CD8-positive, alpha-beta T cell (primary cell): ENCODE measurements at regions of chr1 and their contacts with region 1.

Region 1: GRCh38 chr1:151762941-151763921 is at the start of gene MRPL9:
- DNase-seq: peak; percentile 75 to 89 (median 83)
- ATAC-seq: peak; percentile 99
- H3K4me3 ChIP-seq: peak within 1 kb of the TSS; percentile 78 to 88
- H3K4me3 Mint-ChIP-seq: peak within 1 kb of the TSS; percentile 90
- H3K27ac ChIP-seq: peak within 1 kb of the TSS; percentile 72 to 92
- H3K27ac Mint-ChIP-seq: peak within 1 kb of the TSS; percentile 96
- H3K4me1 ChIP-seq: peaks cover 12% of the 10 kb centered on the region
- H3K4me1 Mint-ChIP-seq: peaks cover 20% of the 10 kb centered on the region
- H3K27me3 ChIP-seq: no peaks in the 10 kb centered on the region
- H3K27me3 Mint-ChIP-seq: no peaks in the 10 kb centered on the region
- CTCF ChIP-seq: no peak
- total RNA-seq, gene MRPL9: 176 to 186 TPM

Region 2: GRCh38 chr1:151165738-151166505 is 597.3 kb before region 1 on chr1 and contains the starts of genes LYSMD1 and SCNM1:
- CTCF ChIA-PET with region 1: no interaction called
- POLR2A ChIA-PET with region 1: no interaction called
- intact Hi-C with region 1: loop called in 1 of 2 experiments (anchors 5 kb)
- DNase-seq: peak; percentile 91 to 99 (median 95)
- ATAC-seq: peak; percentile 96
- H3K4me3 ChIP-seq: peak within 1 kb of the TSS; percentile 82 to 94
- H3K4me3 Mint-ChIP-seq: peak within 1 kb of the TSS; percentile 95
- H3K27ac ChIP-seq: peak within 1 kb of the TSS; percentile 72 to 77
- H3K27ac Mint-ChIP-seq: peak within 1 kb of the TSS; percentile 94
- H3K4me1 ChIP-seq: peaks cover 29% of the 10 kb centered on the region
- H3K4me1 Mint-ChIP-seq: peaks cover 50% of the 10 kb centered on the region
- H3K27me3 ChIP-seq: no peaks in the 10 kb centered on the region
- H3K27me3 Mint-ChIP-seq: no peaks in the 10 kb centered on the region
- CTCF ChIP-seq: no peak
- total RNA-seq, gene LYSMD1: 0.49 to 0.94 TPM
- total RNA-seq, gene SCNM1: 35.0 to 40.4 TPM

Region 3: GRCh38 chr1:151520359-151520758 is 242.9 kb before region 1 on chr1:
- CTCF ChIA-PET with region 1: no interaction called
- POLR2A ChIA-PET with region 1: no interaction called
- intact Hi-C with region 1: no loop called
- DNase-seq: no peak
- ATAC-seq: no peak
- H3K4me3 ChIP-seq: no peak overlapping the region
- H3K4me3 Mint-ChIP-seq: no peak overlapping the region
- H3K27ac ChIP-seq: no peak overlapping the region
- H3K27ac Mint-ChIP-seq: no peak overlapping the region
- H3K4me1 ChIP-seq: no peaks in the 10 kb centered on the region
- H3K4me1 Mint-ChIP-seq: no peaks in the 10 kb centered on the region
- H3K27me3 ChIP-seq: no peaks in the 10 kb centered on the region
- H3K27me3 Mint-ChIP-seq: no peaks in the 10 kb centered on the region
- CTCF ChIP-seq: no peak

Region 4: GRCh38 chr1:151790071-151790940 is 27.1 kb after region 1 on chr1 and contains the start of gene TDRKH:
- CTCF ChIA-PET with region 1: interaction called, 8 read pairs
- POLR2A ChIA-PET with region 1: interaction called, 21 read pairs
- intact Hi-C with region 1: loop called (anchors 1 kb)
- DNase-seq: peak; percentile 95 to 99 (median 97)
- ATAC-seq: peak; percentile 94
- H3K4me3 ChIP-seq: peak within 1 kb of the TSS; percentile 68 to 82
- H3K4me3 Mint-ChIP-seq: peak within 1 kb of the TSS; percentile 98
- H3K27ac ChIP-seq: peak within 1 kb of the TSS; percentile 29 to 37
- H3K27ac Mint-ChIP-seq: peak within 1 kb of the TSS; percentile 89
- H3K4me1 ChIP-seq: peaks cover 12% of the 10 kb centered on the region
- H3K4me1 Mint-ChIP-seq: peaks cover 30% of the 10 kb centered on the region
- H3K27me3 ChIP-seq: no peaks in the 10 kb centered on the region
- H3K27me3 Mint-ChIP-seq: no peaks in the 10 kb centered on the region
- CTCF ChIP-seq: no peak
- total RNA-seq, gene TDRKH: 3.6 to 3.9 TPM